HEK293T (cell line): ENCODE measurements at regions of chr1 and their contacts with region 1.

Region 1: DNA sequence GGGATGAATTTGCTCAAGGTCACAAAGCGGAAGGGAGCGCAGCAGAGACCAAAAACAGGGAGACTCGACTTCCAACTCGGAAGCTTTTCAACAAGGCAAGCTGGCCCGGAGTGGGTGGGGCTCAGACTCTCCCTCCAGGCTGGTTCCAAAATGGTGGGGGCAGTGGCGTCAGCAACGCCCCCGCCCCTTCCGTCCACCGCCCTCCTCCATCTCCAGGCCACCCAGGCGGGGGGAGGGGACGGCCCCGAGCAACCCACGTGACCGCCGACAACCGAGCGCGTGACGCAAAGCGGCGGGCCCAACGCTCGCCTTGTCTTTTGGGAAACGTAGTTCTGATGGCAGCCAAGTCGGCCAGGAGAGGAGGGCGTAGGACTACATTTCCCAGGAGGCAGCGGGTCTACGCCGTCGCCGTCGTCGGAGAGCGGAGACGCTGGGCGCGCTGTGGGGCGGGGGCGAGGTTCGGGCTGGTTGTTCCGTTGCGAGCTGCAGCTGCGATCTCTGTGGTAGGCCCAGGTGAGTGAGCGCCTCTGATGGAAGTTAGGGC is at the start of gene THRAP3:
- DNase-seq: peak; percentile 96

Region 2: GRCh38 chr1:36238433-36238832 is 14.4 kb after region 1 on chr1:
- CTCF ChIA-PET with region 1: interaction called, 4 read pairs
- POLR2A ChIA-PET with region 1: interaction called, 20 read pairs
- DNase-seq: no peak

Region 3: DNA sequence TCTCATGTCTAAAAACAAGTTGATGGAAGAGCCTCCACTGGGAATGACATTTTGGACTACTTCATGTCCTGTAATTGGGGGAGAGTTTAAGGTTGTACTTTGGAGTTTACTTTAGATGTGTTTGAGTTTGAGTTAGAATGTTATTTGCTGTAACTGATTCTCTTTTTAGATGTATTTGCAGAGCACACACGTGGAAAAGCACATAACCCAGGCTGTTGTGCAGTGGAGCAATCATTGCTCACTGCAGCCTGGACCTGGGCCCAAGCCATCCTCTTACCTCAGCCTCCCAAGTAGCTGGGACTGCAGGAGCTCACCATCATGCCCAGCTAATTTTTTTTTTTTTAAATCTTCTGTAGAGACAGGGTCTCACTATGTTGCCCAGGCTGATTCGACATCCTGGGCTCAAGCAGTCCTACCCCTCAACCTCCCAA is 45.4 kb after region 1 on chr1:
- CTCF ChIA-PET with region 1: no interaction called
- POLR2A ChIA-PET with region 1: interaction called, 10 read pairs
- DNase-seq: no peak